ENCODE measurements at regions of chr12 and their contacts with region 1.

Region 1: DNA sequence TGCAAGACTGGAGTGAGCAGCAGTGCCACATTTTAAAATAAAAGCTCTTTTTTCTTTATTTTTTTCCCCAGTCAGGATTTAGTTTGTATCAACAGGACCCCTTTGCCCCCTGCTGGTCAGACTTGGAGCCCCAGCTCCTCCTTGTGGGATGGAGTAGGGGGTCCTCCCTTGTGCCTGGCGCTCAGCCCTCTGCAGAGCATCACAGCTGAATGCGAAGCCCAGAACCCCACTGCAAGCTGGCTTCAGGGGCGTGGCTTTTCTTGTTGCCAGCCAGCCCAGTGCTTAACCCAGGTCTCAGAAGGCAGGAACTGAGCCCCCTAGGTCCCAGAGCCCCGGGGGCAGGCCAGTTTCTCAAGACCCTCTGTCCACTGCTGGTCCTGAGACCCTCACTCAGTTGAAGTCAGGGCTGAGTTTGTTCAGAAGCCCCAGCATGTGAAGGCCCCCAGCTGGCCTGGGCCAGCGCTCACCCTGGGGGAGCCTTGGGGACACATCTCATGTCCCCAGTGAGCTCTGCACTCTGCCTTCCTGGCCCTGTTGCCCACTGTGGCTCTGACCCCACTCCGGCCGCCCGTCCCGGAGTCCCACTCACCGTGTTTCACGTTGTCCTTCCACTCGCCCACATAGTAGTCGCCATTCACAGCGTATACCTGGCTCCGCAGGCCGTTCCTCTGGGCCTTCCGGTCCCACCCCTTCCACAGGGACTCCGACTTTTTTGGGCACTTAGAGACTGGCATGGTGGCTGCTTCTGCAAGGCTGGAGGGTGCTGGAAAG is 519 bp downstream of the MORN3 start:
- DNase-seq: no peak
- H3K4me3 ChIP-seq: no peak overlapping the region
- H3K27ac ChIP-seq: no peak overlapping the region
- H3K27me3 ChIP-seq: no peaks in the 10 kb centered on the region
- CTCF ChIP-seq: peak; percentile 78

Region 2: DNA sequence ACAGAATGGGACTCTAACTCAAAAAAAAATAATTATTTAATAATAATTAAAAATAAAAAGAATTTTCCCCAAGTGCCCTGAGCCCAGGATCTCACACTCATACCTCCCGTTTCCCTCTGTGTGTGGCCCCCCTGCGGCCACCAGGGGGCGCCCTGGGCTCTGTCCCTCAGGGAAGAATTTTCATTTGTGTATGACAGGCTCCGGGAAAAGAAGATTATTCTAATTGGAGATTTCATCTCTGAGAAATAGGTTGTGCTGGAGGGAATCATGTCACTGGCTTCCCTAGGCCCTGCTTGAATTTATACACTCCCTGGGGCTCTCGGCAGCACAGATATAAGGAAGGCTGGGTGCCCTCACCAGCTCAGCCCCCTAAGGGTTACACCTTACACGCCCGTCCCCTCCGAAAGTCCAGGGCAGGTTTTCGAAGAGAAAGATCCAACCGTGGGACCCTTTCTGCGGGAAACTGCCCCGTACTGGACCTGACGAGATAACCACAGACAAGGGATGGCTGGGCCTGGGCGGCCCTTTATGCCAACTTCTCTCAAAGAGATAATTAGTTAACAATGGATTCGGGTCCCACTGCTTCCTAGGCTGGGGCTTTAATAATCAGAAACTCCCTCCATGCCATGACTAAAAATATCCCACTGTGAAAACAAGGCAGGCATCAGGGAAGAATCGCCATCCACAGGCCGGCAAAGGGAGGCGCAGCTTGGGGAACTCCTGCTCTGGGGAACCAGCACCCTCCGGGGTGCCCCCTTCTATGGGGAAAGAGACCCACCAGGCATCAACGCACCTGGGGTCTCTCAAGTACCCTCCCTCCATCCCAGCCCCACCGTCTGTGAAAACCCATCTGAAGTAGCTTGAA is 168.8 kb before region 1 on chr12:
- CTCF ChIA-PET with region 1: interaction called, 30 read pairs
- POLR2A ChIA-PET with region 1: no interaction called
- DNase-seq: peak; percentile 33
- H3K4me3 ChIP-seq: no peak overlapping the region
- H3K27ac ChIP-seq: no peak overlapping the region
- H3K27me3 ChIP-seq: no peaks in the 10 kb centered on the region
- CTCF ChIP-seq: peak; percentile 98

Region 3: GRCh38 chr12:121626087-121626852 is 42.7 kb before region 1 on chr12 and contains the start of gene ORAI1:
- CTCF ChIA-PET with region 1: interaction called, 21 read pairs
- POLR2A ChIA-PET with region 1: interaction called, 4 read pairs
- DNase-seq: peak; percentile 73
- H3K4me3 ChIP-seq: peak within 1 kb of the TSS; percentile 70
- H3K27ac ChIP-seq: peak within 1 kb of the TSS; percentile 68
- H3K27me3 ChIP-seq: no peaks in the 10 kb centered on the region
- CTCF ChIP-seq: no peak
- polyA plus RNA-seq, gene ORAI1: 13.6 and 19.0 TPM in 2 replicates

Region 4: GRCh38 chr12:121657305-121658008 is 11.5 kb before region 1 on chr12:
- CTCF ChIA-PET with region 1: interaction called, 26 read pairs
- POLR2A ChIA-PET with region 1: no interaction called
- DNase-seq: no peak
- H3K4me3 ChIP-seq: no peak overlapping the region
- H3K27ac ChIP-seq: no peak overlapping the region
- H3K27me3 ChIP-seq: no peaks in the 10 kb centered on the region
- CTCF ChIP-seq: no peak

Region 5: GRCh38 chr12:121802846-121803630 is 134.1 kb after region 1 on chr12:
- CTCF ChIA-PET with region 1: no interaction called
- POLR2A ChIA-PET with region 1: no interaction called
- DNase-seq: peak; percentile 92
- H3K4me3 ChIP-seq: peak overlapping the region; percentile 73
- H3K27ac ChIP-seq: peak overlapping the region; percentile 98
- H3K27me3 ChIP-seq: no peaks in the 10 kb centered on the region
- CTCF ChIP-seq: no peak

Region 6: GRCh38 chr12:122137681-122138080 is 468.7 kb after region 1 on chr12:
- CTCF ChIA-PET with region 1: no interaction called
- POLR2A ChIA-PET with region 1: no interaction called
- DNase-seq: no peak
- H3K4me3 ChIP-seq: no peak overlapping the region
- H3K27ac ChIP-seq: no peak overlapping the region
- H3K27me3 ChIP-seq: no peaks in the 10 kb centered on the region
- CTCF ChIP-seq: no peak

Measured in AG04450 (cell line).